ENCODE measurements at regions of chr1 and their contacts with region 1.

Region 1: GRCh38 chr1:16366722-16367257 is at the start of gene SZRD1:
- DNase-seq: peak; percentile 94
- H3K4me3 Mint-ChIP-seq: peak within 1 kb of the TSS; percentile 96
- H3K27ac Mint-ChIP-seq: peak within 1 kb of the TSS; percentile 99
- H3K4me1 Mint-ChIP-seq: peaks cover 38% of the 10 kb centered on the region
- H3K27me3 Mint-ChIP-seq: peaks cover 3% of the 10 kb centered on the region
- total RNA-seq, gene SZRD1: 212 and 216 TPM in 2 replicates

Region 2: DNA sequence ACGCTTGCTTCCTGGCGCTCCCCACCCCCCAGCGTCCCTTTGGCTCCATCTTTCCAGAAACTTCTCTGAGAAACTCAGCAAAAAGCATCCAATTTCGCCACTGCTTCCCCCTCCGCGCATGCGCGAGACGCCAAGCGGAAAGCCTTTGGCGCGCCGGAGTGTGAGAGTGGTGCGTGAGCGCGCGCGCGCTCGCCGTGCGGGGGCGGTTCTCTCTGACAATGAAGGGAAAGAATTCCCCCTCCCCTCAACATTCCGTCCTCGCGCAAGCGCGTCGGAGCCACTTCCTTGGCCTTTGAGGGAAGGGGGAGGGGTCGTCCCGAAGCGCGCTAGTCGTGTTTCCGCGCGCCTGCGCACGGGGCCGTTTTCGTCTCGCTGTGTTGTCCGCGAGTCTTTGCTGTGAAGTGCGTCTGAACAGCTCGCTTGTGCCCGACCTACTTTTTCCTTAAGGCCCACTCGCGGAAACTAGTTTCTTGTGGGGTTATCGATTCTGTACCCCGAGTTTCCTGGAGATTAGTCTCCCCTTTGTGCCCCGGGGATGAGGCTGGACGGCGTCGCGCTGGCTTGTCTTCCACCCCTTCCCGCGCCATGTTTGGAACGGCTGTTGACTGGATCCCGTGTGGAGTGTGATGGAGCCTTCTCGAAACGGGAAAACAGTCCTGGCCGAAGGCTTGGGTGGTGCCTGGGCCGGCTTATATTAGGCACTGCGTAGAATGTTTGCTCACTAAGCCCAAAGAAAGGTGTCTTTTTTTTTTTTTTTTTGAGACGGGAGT is 530.9 kb before region 1 on chr1:
- intact Hi-C with region 1: loop called (anchors 1 kb)
- DNase-seq: peak; percentile 99
- H3K4me3 Mint-ChIP-seq: peak overlapping the region; percentile 95
- H3K27ac Mint-ChIP-seq: peak overlapping the region; percentile 99
- H3K4me1 Mint-ChIP-seq: peaks cover 22% of the 10 kb centered on the region
- H3K27me3 Mint-ChIP-seq: peaks cover 3% of the 10 kb centered on the region

Region 3: GRCh38 chr1:16078925-16079656 is 287.7 kb before region 1 on chr1:
- intact Hi-C with region 1: loop called (anchors 1 kb)
- DNase-seq: peak; percentile 69
- H3K4me3 Mint-ChIP-seq: peak overlapping the region; percentile 69
- H3K27ac Mint-ChIP-seq: peak overlapping the region; percentile 84
- H3K4me1 Mint-ChIP-seq: peaks cover 13% of the 10 kb centered on the region
- H3K27me3 Mint-ChIP-seq: peaks cover 4% of the 10 kb centered on the region

Region 4: DNA sequence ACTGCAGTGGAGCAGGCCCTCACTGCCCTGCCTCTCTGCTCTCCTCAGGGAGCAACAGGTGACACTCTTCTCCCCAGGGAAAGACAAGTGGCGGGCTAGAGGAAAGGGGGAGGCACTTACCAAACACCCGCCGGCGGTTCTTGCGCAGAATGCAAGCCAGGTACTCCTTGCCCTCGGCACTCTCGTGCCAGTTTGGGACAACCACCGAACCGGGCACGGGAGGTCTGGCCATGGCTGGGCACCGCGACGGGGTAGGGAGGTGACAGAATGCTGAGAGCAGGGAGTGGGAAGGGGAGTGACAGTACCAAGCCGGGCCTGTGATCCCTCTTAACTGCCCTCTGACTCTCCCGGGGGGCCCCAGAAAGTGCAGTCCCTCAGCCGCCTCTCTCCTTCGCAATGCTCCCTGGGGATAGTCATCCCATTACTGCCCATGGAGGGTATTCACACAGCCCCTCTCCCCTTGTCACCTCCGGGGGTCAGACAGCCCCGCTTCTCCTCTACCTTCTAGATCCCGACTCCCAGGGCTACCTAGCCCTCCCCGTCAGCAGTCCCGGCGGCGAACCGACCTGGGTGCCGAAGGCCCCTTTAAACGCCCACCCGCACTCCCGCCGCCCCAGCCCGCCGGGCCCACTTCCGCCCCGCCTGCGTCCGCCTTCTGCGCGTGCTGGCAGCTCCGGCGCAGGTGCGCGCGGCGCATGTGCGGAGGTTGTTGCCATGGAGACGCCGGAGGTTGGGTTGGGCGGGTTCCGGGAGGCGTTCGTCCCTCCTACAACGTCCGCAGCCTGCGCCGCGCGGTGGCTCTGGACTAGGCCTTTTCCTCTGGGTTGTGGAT is 130.1 kb before region 1 on chr1 and contains the start of gene CPLANE2:
- intact Hi-C with region 1: loop called (anchors 1 kb)
- DNase-seq: peak; percentile 96
- H3K4me3 Mint-ChIP-seq: peak within 1 kb of the TSS; percentile 83
- H3K27ac Mint-ChIP-seq: peak within 1 kb of the TSS; percentile 87
- H3K4me1 Mint-ChIP-seq: peaks cover 26% of the 10 kb centered on the region
- H3K27me3 Mint-ChIP-seq: no peaks in the 10 kb centered on the region
- total RNA-seq, gene CPLANE2: 3.8 and 4.1 TPM in 2 replicates

Region 5: DNA sequence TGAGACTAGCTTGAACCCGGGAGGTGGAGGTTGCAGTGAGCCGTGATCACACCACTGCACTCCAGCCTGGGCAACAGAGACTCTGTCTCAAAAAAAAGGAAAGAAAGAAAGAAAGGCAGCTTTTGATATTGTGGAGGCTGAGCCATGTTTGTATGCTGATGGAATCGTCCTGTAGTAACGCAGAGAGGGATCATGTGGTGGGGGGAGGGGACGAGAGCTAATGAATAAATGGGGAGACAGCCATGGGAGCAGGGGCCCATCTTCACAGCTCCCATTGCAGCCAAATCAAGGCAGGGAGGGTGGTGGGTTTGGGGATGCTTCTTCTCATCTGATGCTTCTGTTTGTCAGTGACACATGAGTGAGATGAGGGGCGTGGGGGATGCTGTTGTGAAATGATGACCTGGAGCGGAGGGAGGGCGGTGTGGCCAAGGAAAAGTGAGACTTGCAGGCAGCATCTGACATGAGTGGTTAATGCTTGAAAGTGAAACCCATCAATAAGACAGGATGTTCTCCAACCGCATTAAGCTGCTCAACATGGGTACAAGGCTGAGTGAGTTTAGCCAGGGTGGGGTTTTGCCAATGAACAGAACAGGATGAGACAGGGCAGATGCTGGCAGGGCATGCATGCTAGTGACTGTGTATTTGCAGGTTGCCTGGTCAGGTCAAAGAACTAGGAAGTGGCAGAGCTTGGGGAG is 53.8 kb after region 1 on chr1:
- intact Hi-C with region 1: loop called (anchors 1 kb)
- DNase-seq: peak; percentile 54
- H3K4me3 Mint-ChIP-seq: peak overlapping the region; percentile 60
- H3K27ac Mint-ChIP-seq: peak overlapping the region; percentile 80
- H3K4me1 Mint-ChIP-seq: peaks cover 26% of the 10 kb centered on the region
- H3K27me3 Mint-ChIP-seq: peaks cover 4% of the 10 kb centered on the region

Region 6: DNA sequence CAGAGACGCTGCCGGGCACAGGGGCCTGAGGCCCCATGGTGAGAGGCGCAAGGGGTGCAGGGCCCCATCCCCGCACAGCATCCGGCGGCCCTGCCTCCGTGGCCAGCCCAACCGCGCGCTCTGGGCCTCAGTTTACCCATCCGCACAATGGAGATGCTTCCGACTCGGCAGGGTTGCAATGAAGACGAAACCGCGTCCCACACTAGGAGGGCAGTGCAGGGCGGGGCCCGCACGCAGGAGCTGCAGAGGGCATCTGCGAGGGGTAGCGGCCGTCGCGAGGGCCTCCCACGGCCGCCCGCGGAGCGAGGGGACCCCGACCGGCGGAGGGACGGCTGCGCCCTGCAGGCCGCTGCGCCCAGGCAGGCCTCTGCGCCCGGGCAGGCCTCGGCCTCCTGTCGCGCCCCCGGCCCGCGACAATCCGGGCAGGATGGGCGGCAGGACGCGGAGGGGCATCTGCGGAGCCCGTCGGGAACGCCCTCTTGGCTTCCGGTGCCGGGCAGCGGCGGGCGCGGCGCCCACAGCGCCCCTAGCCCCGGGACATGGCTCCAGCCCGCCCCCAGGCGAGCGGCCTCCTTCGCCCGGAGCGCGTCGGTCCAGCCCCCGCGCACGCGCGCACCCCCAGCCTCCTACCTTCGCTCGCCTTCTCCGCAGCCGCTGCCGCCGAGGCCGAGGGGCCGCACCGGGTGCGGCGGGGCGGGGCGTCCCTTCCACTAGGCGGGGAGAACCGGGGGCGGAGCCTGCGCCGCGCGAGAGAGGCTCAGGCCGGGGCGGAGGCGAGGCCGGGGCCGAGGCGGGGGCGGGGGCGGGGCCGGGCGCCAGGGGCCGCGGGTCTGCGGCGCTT is 132.0 kb after region 1 on chr1:
- intact Hi-C with region 1: loop called (anchors 5 kb)
- DNase-seq: peak; percentile 85
- H3K4me3 Mint-ChIP-seq: peak overlapping the region; percentile 83
- H3K27ac Mint-ChIP-seq: peak overlapping the region; percentile 67
- H3K4me1 Mint-ChIP-seq: peaks cover 8% of the 10 kb centered on the region
- H3K27me3 Mint-ChIP-seq: peaks cover 11% of the 10 kb centered on the region

Region 7: DNA sequence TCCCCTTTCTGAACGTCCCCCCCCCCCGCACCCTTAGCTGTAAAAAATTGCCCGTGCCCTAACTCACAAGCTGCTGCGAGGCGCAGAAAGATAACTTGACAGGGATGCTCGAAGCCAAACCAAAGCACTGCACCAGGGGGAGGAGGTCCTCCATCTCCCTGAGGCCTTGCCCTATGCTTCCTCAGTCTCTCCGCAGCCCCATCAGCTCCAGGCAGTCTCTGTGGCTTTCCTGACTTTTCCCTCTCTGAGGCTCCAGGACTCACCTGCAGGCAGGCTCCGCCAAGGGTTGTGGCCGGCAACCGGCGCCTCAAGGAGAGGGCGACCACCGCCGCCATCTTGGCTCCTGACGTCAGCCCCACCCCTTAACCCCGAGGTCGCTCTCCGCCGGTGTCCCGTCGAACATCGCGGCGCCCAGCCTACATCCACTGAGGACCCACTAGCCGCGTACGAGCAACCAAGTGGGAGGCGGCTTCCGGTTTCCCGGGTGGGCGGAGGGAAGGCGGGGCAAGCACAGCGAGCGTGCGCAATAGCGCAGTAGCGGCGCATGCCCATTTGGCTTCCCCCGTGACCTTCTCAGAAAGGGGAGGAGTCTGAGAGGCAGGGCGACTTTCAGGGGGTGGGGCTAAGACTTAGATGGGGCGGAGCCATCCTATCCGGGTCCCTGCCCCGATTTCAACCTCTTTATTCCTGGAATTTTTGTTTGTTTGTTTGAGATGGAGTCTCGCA is 687.1 kb after region 1 on chr1 and contains the start of gene SDHB:
- intact Hi-C with region 1: loop called (anchors 5 kb)
- DNase-seq: peak; percentile 99
- H3K4me3 Mint-ChIP-seq: peak within 1 kb of the TSS; percentile 99
- H3K27ac Mint-ChIP-seq: peak within 1 kb of the TSS; percentile 95
- H3K4me1 Mint-ChIP-seq: peaks cover 18% of the 10 kb centered on the region
- H3K27me3 Mint-ChIP-seq: peaks cover 2% of the 10 kb centered on the region
- total RNA-seq, gene SDHB: 131 and 137 TPM in 2 replicates

Measured in activated T-helper 1 cell treated with anti-CD3 and anti-CD28 coated beads, Interleukin-12 subunit alpha, Interleukin-12 subunit beta, Interleukin-2, Interleukin-4 antibody, amounts not matched to agents 30 ng/mL and 10 ng/mL and 1 ng/mL, durations not matched to agents 14 hours and 24 hours and 36 hours (primary cell).